MCF 10A (cell line): ENCODE measurements at regions of chr5 and their contacts with region 1.

Region 1: GRCh38 chr5:79020861-79021561 is 35.9 kb upstream of the ARSB start:
- DNase-seq: peak; percentile 59
- H3K4me3 Mint-ChIP-seq: no peak overlapping the region
- H3K27ac Mint-ChIP-seq: no peak overlapping the region
- H3K4me1 Mint-ChIP-seq: peaks cover 11% of the 10 kb centered on the region
- H3K27me3 Mint-ChIP-seq: peaks cover 11% of the 10 kb centered on the region
- CTCF ChIP-seq: peak; percentile 74

Region 2: DNA sequence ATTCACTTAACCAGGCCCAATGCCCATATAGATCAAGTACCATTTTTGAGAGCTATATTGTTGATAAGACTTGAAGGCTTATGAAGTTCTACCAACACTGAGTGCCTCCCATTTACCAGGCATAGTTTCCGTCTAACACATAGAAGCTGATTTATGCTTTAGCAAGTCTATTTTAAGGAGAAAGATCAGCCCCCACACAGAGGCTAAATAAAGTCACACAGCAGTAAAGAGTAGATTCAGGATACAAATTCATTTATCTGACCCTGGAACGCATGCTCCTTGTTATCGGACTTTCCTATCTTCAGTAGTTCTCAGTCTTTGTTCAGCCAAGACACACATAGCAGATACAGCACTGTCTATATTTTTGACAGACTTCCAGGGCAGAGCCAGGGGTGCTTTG is 14.2 kb after region 1 on chr5:
- CTCF ChIA-PET with region 1: interaction called, 16 read pairs
- POLR2A ChIA-PET with region 1: no interaction called
- intact Hi-C with region 1: no loop called
- DNase-seq: no peak
- H3K4me3 Mint-ChIP-seq: no peak overlapping the region
- H3K27ac Mint-ChIP-seq: no peak overlapping the region
- H3K4me1 Mint-ChIP-seq: no peaks in the 10 kb centered on the region
- H3K27me3 Mint-ChIP-seq: no peaks in the 10 kb centered on the region
- CTCF ChIP-seq: no peak

Region 3: DNA sequence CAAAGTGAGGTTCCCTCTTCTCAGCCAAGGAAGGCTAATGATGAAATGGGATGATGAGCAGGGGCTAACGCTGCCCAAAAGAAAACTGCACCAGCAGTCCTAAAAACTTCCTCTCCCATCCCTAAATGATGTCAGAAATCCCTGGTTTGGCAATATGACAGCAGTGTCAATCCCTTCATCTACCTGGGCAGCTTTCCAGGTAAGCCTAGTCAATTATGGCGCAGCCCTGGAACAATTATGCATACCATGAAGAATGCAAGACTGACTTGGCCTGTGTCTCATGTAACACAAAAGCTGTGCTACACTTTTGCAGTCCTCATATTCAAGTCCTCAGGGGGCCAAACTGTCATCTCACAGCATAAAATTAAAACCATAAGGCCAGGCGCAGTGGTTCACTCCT is 41.4 kb after region 1 on chr5:
- CTCF ChIA-PET with region 1: interaction called, 10 read pairs
- POLR2A ChIA-PET with region 1: no interaction called
- intact Hi-C with region 1: no loop called
- DNase-seq: peak; percentile 68
- H3K4me3 Mint-ChIP-seq: no peak overlapping the region
- H3K27ac Mint-ChIP-seq: no peak overlapping the region
- H3K4me1 Mint-ChIP-seq: no peaks in the 10 kb centered on the region
- H3K27me3 Mint-ChIP-seq: no peaks in the 10 kb centered on the region
- CTCF ChIP-seq: no peak

Region 4: DNA sequence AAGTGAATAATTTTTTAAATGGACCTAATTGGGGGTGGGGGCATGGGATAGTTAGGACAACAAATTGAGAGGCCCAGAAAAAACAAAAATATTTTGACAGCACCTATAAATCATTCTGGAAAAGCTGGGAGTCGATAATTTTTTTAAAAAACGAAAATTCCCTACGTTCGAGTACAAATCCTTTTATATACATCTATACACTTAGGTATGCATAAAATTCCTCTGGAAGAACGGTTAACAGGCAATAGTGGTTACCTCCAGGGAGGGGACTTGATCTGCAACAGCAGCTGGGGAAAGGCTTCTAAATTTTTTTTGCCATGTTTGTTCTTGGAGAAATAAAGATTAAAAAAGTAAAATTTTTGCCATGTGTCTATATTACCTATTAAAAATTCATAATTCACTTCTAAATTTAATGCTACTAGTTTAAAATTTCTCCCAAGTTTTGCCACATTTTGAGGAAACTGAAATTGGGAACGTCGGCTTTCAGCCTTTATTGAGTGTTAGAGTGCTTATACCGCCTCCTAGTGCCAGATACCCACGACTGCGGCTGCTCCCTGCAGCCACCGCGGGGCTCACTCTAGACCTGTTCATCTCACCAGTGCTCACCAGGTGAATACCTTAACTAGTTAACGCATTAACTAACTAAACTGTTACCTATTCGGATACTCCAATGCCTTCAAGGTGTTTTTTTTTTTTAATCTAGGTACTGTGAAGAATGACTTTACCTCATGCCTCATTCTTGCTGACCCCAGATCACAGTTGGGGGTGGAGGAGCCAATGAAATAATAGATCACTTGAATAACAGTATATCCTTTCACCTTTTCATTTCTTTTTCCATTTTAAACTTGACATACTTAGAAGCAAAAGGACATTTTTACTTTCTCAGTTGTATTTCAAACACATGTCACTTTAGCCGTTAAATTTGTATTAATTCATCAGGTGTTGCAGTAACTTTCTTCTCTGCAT is 88.8 kb after region 1 on chr5:
- CTCF ChIA-PET with region 1: interaction called, 16 read pairs
- POLR2A ChIA-PET with region 1: interaction called, 3 read pairs
- intact Hi-C with region 1: loop called (anchors 5 kb)
- DNase-seq: peak; percentile 43
- H3K4me3 Mint-ChIP-seq: no peak overlapping the region
- H3K27ac Mint-ChIP-seq: no peak overlapping the region
- H3K4me1 Mint-ChIP-seq: no peaks in the 10 kb centered on the region
- H3K27me3 Mint-ChIP-seq: no peaks in the 10 kb centered on the region
- CTCF ChIP-seq: peak; percentile 42

Region 5: DNA sequence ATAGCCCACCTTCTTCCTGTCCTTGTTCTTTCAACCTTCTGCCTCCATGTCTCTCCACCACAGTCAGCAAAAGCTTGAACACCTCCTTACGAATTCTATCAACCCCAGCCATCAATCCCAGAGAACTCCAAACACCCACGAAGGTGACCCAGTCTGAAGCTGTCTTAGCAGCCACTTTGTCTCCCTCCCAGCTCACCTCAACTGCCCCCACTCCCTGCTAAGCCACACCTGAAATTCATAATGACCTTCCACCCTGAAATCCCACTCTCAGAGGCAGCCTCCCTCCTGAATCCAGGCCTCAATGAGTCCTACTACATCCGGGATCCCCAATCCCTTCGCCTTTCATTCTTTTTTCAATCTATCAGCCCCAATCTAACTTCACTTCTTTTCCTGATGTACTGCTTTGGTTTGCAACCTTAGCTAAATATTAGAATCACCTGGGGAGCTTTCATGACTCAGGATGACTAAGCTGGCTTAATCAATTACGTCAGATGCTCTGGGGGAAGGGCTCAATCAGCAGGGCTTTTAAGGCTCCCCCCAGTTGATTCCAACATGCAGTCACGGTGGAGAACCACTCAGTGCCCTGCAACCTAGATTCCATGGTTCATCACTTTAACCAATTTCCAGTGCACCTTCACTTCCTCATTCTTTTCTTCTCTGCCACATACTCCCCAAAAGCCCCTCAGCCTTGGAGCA is 122.8 kb after region 1 on chr5:
- CTCF ChIA-PET with region 1: interaction called, 28 read pairs
- POLR2A ChIA-PET with region 1: no interaction called
- intact Hi-C with region 1: no loop called
- DNase-seq: peak; percentile 62
- H3K4me3 Mint-ChIP-seq: no peak overlapping the region
- H3K27ac Mint-ChIP-seq: peak overlapping the region; percentile 57
- H3K4me1 Mint-ChIP-seq: peaks cover 19% of the 10 kb centered on the region
- H3K27me3 Mint-ChIP-seq: no peaks in the 10 kb centered on the region
- CTCF ChIP-seq: no peak

Region 6: GRCh38 chr5:79535477-79536192 is 514.6 kb after region 1 on chr5:
- CTCF ChIA-PET with region 1: interaction called, 4 read pairs
- POLR2A ChIA-PET with region 1: no interaction called
- intact Hi-C with region 1: loop called (anchors 5 kb)
- DNase-seq: peak; percentile 18
- H3K4me3 Mint-ChIP-seq: no peak overlapping the region
- H3K27ac Mint-ChIP-seq: no peak overlapping the region
- H3K4me1 Mint-ChIP-seq: no peaks in the 10 kb centered on the region
- H3K27me3 Mint-ChIP-seq: no peaks in the 10 kb centered on the region
- CTCF ChIP-seq: peak; percentile 22

Region 7: DNA sequence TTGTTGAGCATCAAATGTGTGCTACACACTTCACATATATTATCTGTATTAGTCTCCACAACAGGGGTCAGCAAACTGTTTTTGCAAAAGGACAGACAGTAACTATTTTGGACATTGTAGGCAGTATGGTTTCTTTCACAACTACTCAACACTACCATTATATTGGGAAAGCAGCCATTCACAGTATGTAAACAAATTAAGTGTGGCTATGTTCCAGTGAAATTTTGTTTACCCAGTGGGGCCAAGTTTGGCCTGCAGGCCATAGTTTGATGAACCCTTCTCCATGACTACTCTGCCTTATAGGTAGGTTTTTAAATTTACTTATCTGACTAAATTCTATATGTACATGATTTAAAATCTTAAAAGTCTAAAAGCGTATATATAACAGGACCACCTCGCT is 1453.9 kb after region 1 on chr5:
- CTCF ChIA-PET with region 1: no interaction called
- POLR2A ChIA-PET with region 1: no interaction called
- intact Hi-C with region 1: no loop called
- DNase-seq: no peak
- H3K4me3 Mint-ChIP-seq: no peak overlapping the region
- H3K27ac Mint-ChIP-seq: no peak overlapping the region
- H3K4me1 Mint-ChIP-seq: no peaks in the 10 kb centered on the region
- H3K27me3 Mint-ChIP-seq: no peaks in the 10 kb centered on the region
- CTCF ChIP-seq: no peak